ENCODE measurements at regions of chr3 and their contacts with region 1.

Region 1: DNA sequence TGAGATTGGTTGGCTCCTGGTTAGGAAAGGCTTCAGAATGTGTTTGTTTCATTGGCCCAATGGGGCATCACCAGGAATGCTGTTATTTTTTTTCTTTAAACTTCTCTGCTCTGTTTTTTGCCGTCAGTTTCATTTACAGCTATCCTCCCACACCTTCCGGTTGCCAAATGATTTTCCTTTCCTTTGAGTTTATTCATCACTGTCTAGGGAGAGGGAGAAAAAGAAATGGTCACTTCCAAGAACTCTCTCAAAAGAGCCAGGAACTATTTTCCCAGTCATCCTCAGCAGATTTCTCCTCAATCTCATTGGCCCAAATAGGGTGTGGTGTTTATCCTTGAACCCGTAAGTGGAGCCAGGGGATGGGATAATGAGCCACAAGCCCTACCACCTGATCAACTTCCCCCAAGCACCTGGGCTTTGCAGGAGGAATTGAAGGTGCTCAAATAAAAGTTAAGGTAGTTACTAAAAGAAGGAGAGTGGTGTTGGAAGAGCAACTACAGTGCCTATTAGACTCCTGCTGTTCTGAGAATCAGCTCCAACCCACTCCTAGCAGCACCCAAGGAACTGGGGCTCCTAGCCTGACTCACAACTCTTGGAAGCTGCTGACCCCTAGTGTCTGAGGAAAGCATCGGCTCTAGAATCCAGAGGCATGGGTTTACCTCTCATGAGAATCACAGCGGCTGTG is 183.8 kb upstream of the IL12A start:
- DNase-seq: peak; percentile 73
- ATAC-seq: peak; percentile 99
- H3K4me3 ChIP-seq: no peak overlapping the region
- H3K27ac ChIP-seq: no peak overlapping the region
- H3K4me1 ChIP-seq: peaks cover 7% of the 10 kb centered on the region; the same call in 1 of the 2 replicates
- H3K27me3 ChIP-seq: no peaks in the 10 kb centered on the region
- CTCF ChIP-seq: peak; percentile 94
- EP300 ChIP-seq: no peak
- POLR2A ChIP-seq: no peak
- RAD21 ChIP-seq: peak; percentile 91

Region 2: DNA sequence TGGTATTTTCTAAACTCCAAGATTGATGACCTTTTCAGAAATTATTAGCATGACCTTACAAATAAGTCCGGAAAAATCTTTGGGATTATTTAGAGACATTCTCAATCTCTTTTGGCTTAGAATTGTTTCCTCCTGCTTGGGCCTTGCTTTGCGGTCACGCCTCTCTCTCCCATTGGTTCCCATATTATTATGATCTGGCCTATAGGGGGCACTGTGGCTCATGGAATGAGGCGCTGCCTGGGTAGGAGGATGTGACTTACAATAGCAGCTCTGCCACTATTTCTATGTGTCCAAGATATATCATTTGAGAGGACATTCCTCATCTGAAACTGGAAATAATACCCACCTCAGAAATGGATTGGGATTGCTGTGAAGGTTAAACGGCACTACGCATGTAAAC is 538.1 kb before region 1 on chr3:
- CTCF ChIA-PET with region 1: interaction called, 19 read pairs
- POLR2A ChIA-PET with region 1: no interaction called
- in situ Hi-C with region 1: loop called (anchors 5 kb)
- intact Hi-C with region 1: loop called (anchors 1 kb)
- DNase-seq: peak; percentile 23
- ATAC-seq: peak; percentile 69
- H3K4me3 ChIP-seq: no peak overlapping the region
- H3K27ac ChIP-seq: no peak overlapping the region
- H3K4me1 ChIP-seq: no peaks in the 10 kb centered on the region
- H3K27me3 ChIP-seq: no peaks in the 10 kb centered on the region
- CTCF ChIP-seq: peak; percentile 69
- EP300 ChIP-seq: no peak
- POLR2A ChIP-seq: no peak
- RAD21 ChIP-seq: no peak

Region 3: GRCh38 chr3:159616212-159616825 is 188.5 kb before region 1 on chr3:
- CTCF ChIA-PET with region 1: interaction called, 14 read pairs
- POLR2A ChIA-PET with region 1: no interaction called
- in situ Hi-C with region 1: loop called (anchors 5 kb)
- intact Hi-C with region 1: loop called (anchors 1 kb)
- DNase-seq: no peak
- ATAC-seq: peak; percentile 57
- H3K4me3 ChIP-seq: no peak overlapping the region
- H3K27ac ChIP-seq: no peak overlapping the region
- H3K4me1 ChIP-seq: no peaks in the 10 kb centered on the region
- H3K27me3 ChIP-seq: no peaks in the 10 kb centered on the region
- CTCF ChIP-seq: peak; percentile 72
- EP300 ChIP-seq: no peak
- POLR2A ChIP-seq: no peak
- RAD21 ChIP-seq: no peak

Region 4: GRCh38 chr3:159763602-159764489 is 41.0 kb before region 1 on chr3:
- CTCF ChIA-PET with region 1: interaction called, 5 read pairs
- POLR2A ChIA-PET with region 1: no interaction called
- in situ Hi-C with region 1: no loop called
- intact Hi-C with region 1: loop called (anchors 2 kb)
- DNase-seq: no peak
- ATAC-seq: peak; percentile 85
- H3K4me3 ChIP-seq: peak overlapping the region; percentile 50 to 73 (median 61); a peak in 5 of 6 replicates
- H3K27ac ChIP-seq: no peak overlapping the region
- H3K4me1 ChIP-seq: peaks cover 18% of the 10 kb centered on the region
- H3K27me3 ChIP-seq: peaks cover 10 to 44% of the 10 kb centered on the region in 2 experiments
- CTCF ChIP-seq: peak; percentile 13; the same call in 1 of the 2 replicates
- EP300 ChIP-seq: no peak
- POLR2A ChIP-seq: no peak
- RAD21 ChIP-seq: no peak

Region 5: DNA sequence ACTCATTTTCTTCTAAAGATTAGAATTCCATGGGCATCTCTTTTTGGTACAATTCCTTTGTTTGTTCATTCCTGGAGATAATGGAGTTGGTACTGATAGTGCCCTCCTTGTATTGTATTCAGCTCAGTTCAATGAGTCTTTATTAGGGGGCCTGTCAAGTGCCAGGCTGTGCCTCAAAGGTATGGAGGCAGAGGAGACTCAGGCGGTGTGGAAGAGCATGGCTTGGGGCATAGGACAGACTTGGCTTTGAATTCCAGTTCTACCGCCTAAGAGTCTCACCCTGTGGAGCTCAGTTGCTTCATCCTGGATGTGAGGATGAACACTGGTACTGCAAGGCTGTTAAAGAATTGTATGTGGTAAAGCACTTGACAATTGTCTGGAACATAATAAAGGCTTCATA is 12.8 kb before region 1 on chr3:
- CTCF ChIA-PET with region 1: no interaction called
- POLR2A ChIA-PET with region 1: no interaction called
- in situ Hi-C with region 1: no loop called
- intact Hi-C with region 1: no loop called
- DNase-seq: no peak
- ATAC-seq: no peak
- H3K4me3 ChIP-seq: no peak overlapping the region
- H3K27ac ChIP-seq: no peak overlapping the region
- H3K4me1 ChIP-seq: peaks cover 49% of the 10 kb centered on the region
- H3K27me3 ChIP-seq: no peaks in the 10 kb centered on the region
- CTCF ChIP-seq: no peak
- EP300 ChIP-seq: no peak
- POLR2A ChIP-seq: no peak
- RAD21 ChIP-seq: no peak